ENCODE measurements at regions of chr6 and their contacts with region 1.

Region 1: GRCh38 chr6:157335829-157336228 is 12.5 kb upstream of the TMEM242 start:
- DNase-seq: no peak
- ATAC-seq: no peak
- H3K4me3 Mint-ChIP-seq: no peak overlapping the region
- H3K27ac Mint-ChIP-seq: no peak overlapping the region
- H3K4me1 Mint-ChIP-seq: no peaks in the 10 kb centered on the region
- H3K27me3 Mint-ChIP-seq: peaks cover 27% of the 10 kb centered on the region
- CTCF ChIP-seq: no peak

Region 2: DNA sequence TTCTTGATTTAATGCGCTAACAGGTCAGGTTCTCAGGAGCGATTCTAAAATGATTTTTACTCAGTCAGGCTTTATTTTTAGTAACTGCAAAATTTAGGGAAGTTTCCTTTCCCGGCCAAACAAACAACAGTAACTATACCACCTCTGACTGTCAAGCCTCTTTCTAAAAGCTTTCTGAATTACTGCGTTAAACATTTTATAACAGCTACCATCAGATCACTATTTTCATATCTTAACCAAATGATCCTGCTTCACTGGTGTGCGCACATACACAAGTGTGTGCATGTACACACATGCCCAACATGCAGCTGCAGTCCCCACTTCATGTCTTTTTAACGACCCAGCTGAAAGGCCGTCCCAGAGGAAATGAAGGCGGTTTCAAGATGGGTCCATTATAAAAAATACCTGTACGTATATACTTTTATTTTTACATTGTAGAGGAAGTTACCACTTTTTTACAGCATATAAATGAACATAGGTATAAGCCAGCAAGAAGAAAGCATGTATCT is 37.6 kb before region 1 on chr6:
- CTCF ChIA-PET with region 1: no interaction called
- POLR2A ChIA-PET with region 1: no interaction called
- intact Hi-C with region 1: no loop called
- DNase-seq: no peak
- ATAC-seq: no peak
- H3K4me3 Mint-ChIP-seq: no peak overlapping the region
- H3K27ac Mint-ChIP-seq: no peak overlapping the region
- H3K4me1 Mint-ChIP-seq: peaks cover 4% of the 10 kb centered on the region
- H3K27me3 Mint-ChIP-seq: no peaks in the 10 kb centered on the region
- CTCF ChIP-seq: no peak

Region 3: GRCh38 chr6:157314705-157315321 is 21.0 kb before region 1 on chr6:
- CTCF ChIA-PET with region 1: interaction called, 28 read pairs
- POLR2A ChIA-PET with region 1: no interaction called
- intact Hi-C with region 1: no loop called
- DNase-seq: peak; percentile 32
- ATAC-seq: peak; percentile 93
- H3K4me3 Mint-ChIP-seq: no peak overlapping the region
- H3K27ac Mint-ChIP-seq: no peak overlapping the region
- H3K4me1 Mint-ChIP-seq: peaks cover 6% of the 10 kb centered on the region
- H3K27me3 Mint-ChIP-seq: no peaks in the 10 kb centered on the region
- CTCF ChIP-seq: peak; percentile 90

Region 4: GRCh38 chr6:157323255-157323965 is 12.4 kb before region 1 on chr6 and contains the start of gene TMEM242:
- CTCF ChIA-PET with region 1: interaction called, 40 read pairs
- POLR2A ChIA-PET with region 1: interaction called, 8 read pairs
- intact Hi-C with region 1: no loop called
- DNase-seq: peak; percentile 91
- ATAC-seq: peak; percentile 94
- H3K4me3 Mint-ChIP-seq: peak within 1 kb of the TSS; percentile 91
- H3K27ac Mint-ChIP-seq: peak within 1 kb of the TSS; percentile 88
- H3K4me1 Mint-ChIP-seq: peaks cover 31% of the 10 kb centered on the region
- H3K27me3 Mint-ChIP-seq: peaks cover 21% of the 10 kb centered on the region
- CTCF ChIP-seq: peak; percentile 16
- total RNA-seq, gene TMEM242: 7.8 to 8.0 TPM